ENCODE measurements at regions of chr7 and their contacts with region 1.

Region 1: GRCh38 chr7:38369816-38370493 is 96.5 kb upstream of the TARP start:
- DNase-seq: peak; percentile 91
- ATAC-seq: peak; percentile 77
- H3K4me3 Mint-ChIP-seq: peak overlapping the region; percentile 31
- H3K27ac Mint-ChIP-seq: peak overlapping the region; percentile 60
- H3K4me1 Mint-ChIP-seq: peaks cover 61% of the 10 kb centered on the region
- H3K27me3 Mint-ChIP-seq: no peaks in the 10 kb centered on the region

Region 2: GRCh38 chr7:38107486-38107893 is 262.5 kb before region 1 on chr7:
- CTCF ChIA-PET with region 1: interaction called, 70 read pairs
- DNase-seq: peak; percentile 79
- ATAC-seq: peak; percentile 91
- H3K4me3 Mint-ChIP-seq: no peak overlapping the region
- H3K27ac Mint-ChIP-seq: no peak overlapping the region
- H3K4me1 Mint-ChIP-seq: peaks cover 2% of the 10 kb centered on the region
- H3K27me3 Mint-ChIP-seq: peaks cover 36% of the 10 kb centered on the region

Region 3: GRCh38 chr7:38186593-38187314 is 183.2 kb before region 1 on chr7:
- CTCF ChIA-PET with region 1: interaction called, 24 read pairs
- DNase-seq: no peak
- ATAC-seq: no peak
- H3K4me3 Mint-ChIP-seq: no peak overlapping the region
- H3K27ac Mint-ChIP-seq: no peak overlapping the region
- H3K4me1 Mint-ChIP-seq: peaks cover 16% of the 10 kb centered on the region
- H3K27me3 Mint-ChIP-seq: no peaks in the 10 kb centered on the region

Region 4: GRCh38 chr7:38215735-38216670 is 154.0 kb before region 1 on chr7:
- CTCF ChIA-PET with region 1: interaction called, 314 read pairs
- DNase-seq: peak; percentile 90
- ATAC-seq: peak; percentile 65
- H3K4me3 Mint-ChIP-seq: peak overlapping the region; percentile 34
- H3K27ac Mint-ChIP-seq: peak overlapping the region; percentile 91
- H3K4me1 Mint-ChIP-seq: peaks cover 55% of the 10 kb centered on the region
- H3K27me3 Mint-ChIP-seq: no peaks in the 10 kb centered on the region

Region 5: DNA sequence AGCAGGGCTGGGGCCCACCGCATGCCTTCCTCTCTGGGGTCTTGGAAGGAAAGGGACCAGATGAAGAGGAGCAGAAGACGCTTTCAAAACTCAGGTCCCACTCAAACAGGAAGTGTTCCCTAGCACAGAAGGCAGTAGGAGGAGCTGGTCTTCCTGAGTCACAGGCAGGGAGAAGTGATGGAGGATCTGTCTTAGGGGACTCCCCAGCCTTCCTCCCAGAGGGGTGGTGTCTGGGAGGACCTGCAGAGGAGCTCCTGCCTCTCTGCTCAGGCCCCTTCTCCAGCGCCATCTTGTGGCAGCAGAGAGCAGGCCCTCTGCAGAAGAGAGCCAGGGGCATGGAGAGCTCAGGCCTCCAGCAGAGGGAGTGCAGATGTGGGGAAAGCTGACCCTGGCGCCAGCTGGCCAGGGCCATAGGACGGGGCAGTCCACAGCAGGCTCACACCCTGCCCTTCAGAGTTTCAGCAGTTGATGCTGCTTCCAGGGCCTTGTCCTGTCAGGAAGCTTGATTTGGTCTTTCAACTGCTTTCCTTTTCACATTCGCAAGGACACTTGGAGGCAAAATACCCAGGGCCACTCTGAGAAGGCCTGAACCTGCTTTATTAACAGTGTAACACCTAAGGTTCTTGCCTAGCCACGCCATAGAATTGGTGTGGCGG is 34.3 kb before region 1 on chr7:
- CTCF ChIA-PET with region 1: interaction called, 63 read pairs
- DNase-seq: peak; percentile 93
- ATAC-seq: peak; percentile 75
- H3K4me3 Mint-ChIP-seq: peak overlapping the region; percentile 81
- H3K27ac Mint-ChIP-seq: peak overlapping the region; percentile 91
- H3K4me1 Mint-ChIP-seq: peaks cover 45% of the 10 kb centered on the region
- H3K27me3 Mint-ChIP-seq: no peaks in the 10 kb centered on the region